ENCODE measurements at regions of chr9 and their contacts with region 1.

Region 1: GRCh38 chr9:17810728-17811571 is 232.1 kb downstream of the SH3GL2 start:
- DNase-seq: peak; percentile 36
- CTCF ChIP-seq: peak; percentile 87

Region 2: DNA sequence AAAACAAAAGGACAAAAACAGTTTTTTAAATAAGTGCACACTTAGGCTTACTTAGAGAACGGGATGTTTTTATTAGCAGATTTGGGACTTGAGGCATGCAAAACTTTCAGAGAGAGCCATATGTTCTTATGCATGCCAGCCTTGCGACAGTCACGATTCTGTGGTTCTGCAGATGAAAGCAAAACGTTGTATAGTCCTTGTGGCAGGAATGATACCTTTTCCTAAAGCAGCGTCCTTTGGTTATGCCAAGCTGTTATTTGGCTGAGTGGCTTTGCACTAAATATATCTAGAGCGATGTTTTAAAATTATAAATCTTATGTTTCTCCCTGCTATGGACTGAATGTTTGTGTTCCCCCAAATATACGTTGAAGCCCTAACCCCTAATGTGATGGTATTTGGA is 80.1 kb before region 1 on chr9:
- CTCF ChIA-PET with region 1: no interaction called
- POLR2A ChIA-PET with region 1: no interaction called
- DNase-seq: no peak
- CTCF ChIP-seq: no peak

Region 3: DNA sequence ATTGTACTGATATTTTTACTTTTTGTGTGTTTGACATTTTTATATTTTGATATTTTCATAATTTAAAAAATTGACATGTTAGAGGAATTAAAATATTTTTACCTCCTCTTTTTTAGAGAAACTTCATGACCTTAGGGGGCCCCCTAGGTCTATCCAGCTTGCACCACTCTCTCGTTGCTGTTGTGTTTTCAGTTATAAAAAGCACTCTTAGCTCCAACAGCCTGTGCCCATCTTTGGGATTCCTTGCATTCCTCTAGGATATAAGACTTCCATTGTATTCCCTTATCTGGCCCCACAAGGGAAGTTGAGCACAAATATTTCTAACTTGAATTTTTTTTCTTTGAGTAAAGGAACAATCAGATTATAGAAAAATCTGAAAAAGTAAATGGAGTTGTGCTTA is 13.2 kb after region 1 on chr9:
- CTCF ChIA-PET with region 1: interaction called, 19 read pairs
- POLR2A ChIA-PET with region 1: no interaction called
- DNase-seq: no peak
- CTCF ChIP-seq: no peak

Region 4: DNA sequence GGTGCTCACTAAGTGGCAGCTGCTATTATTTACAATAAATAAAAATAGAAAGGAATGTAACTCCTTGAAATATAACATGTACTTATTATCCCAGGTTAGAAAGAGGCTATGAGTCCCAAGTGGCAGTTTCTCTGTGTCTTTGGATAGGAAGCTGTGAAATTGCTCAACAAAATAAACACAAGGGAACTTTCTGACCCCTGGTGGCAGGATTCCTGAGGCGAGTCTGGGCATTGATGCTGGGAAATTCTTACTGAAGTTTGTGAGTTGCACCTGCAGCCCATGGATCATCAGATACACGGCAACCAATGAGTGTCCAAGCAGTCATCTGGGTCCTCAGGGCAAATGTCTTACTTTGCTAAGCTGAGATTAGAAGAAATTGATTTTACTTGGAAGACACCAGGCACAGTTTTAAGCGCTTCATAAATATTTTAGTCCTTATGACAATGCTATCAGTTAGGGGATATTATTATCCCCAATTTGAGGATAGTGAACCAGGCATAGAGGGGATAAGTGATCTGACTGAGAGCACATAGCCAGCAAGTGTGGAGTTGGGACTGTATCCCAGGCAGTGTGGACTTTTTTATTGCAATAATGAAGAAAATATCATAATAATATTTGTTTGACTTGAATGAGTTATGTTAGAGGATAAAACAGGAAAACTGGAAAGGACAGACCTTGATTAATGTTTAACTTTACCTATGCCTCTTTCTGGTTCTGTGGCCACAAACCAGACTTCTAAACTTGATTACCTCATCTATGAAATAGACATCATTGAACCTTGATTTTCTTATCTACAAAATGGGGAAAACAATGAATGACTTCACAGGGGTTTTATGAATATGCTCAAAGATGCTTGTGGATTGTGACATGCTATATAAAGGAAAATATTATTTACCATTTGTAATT is 397.5 kb after region 1 on chr9:
- CTCF ChIA-PET with region 1: interaction called, 93 read pairs
- POLR2A ChIA-PET with region 1: no interaction called
- DNase-seq: no peak
- CTCF ChIP-seq: no peak

Region 5: DNA sequence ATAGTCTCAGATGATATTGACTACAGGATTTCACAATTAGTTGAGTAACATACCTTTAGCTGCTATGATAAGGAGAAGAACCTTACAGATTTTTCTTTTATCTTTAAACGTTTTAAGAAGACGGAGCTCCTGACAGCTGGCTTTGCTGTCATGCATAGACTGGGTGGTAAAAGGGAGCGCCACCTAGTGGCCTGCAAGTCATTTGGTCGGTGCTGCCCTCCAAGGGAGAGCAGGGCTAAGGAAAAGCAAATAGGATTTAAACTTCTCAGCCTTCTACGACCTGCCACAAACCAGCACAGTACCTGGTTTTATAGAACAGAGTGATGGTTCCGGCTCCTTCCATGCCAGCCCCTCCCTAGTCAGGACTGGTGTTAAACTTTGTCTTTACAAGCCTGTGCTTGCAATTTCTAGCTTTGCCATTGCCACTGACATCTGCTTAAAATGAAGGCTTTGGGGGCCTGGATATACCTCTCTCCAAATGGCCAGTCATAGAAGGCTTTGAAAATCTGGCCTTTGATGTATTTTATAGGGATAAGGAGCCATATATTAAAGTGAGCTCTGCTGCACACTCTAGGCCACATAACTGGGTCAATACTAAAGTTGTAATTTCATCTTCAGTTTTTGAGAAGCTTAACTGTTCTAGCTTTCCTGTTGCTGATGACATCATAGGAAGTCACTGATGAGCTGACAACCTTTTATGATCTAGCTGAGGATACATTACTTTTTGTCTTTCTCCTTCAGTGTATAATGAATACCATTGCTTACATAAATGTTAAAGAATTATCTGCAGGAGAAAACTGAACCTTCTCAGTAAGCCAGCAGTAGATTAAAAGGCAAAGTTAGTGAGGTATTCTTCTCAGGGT is 631.9 kb after region 1 on chr9:
- CTCF ChIA-PET with region 1: interaction called, 17 read pairs
- POLR2A ChIA-PET with region 1: no interaction called
- DNase-seq: peak; percentile 56
- CTCF ChIP-seq: peak; percentile 86

Measured in GM10248 (cell line).